ENCODE measurements at regions of chrX and their contacts with region 1.

Region 1: GRCh38 chrX:41084044-41084892 is 977 bp upstream of the USP9X start:
- DNase-seq: peak; percentile 89 to 100 (median 98)
- ATAC-seq: peak; percentile 81
- H3K4me3 ChIP-seq: peak overlapping the region; percentile 97
- H3K4me3 Mint-ChIP-seq: peak overlapping the region; percentile 86 to 98 (median 94)
- H3K27ac ChIP-seq: peak overlapping the region; percentile 99
- H3K27ac Mint-ChIP-seq: peak overlapping the region; percentile 96 to 100 (median 99)
- H3K4me1 ChIP-seq: peaks cover under 1 to 7% of the 10 kb centered on the region in 2 donors
- H3K4me1 Mint-ChIP-seq: peaks cover 7 to 40% (median 17%) of the 10 kb centered on the region in 7 donors
- H3K27me3 ChIP-seq: no peaks in the 10 kb centered on the region
- H3K27me3 Mint-ChIP-seq: no peaks in the 10 kb centered on the region

Region 2: GRCh38 chrX:40175511-40176350 is 908.5 kb before region 1 on chrX:
- CTCF ChIA-PET with region 1: no interaction called
- POLR2A ChIA-PET with region 1: no interaction called
- intact Hi-C with region 1: loop called (anchors 5 to 10 kb)
- DNase-seq: peak; percentile 60 to 91 (median 83)
- ATAC-seq: peak; percentile 58
- H3K4me3 ChIP-seq: peak overlapping the region; percentile 73
- H3K4me3 Mint-ChIP-seq: peak overlapping the region; percentile 89 to 93 (median 90)
- H3K27ac ChIP-seq: peak overlapping the region; percentile 98
- H3K27ac Mint-ChIP-seq: peak overlapping the region; percentile 96 to 100 (median 98)
- H3K4me1 ChIP-seq: peaks cover 13 to 18% of the 10 kb centered on the region in 2 donors
- H3K4me1 Mint-ChIP-seq: peaks cover 5 to 46% (median 36%) of the 10 kb centered on the region in 7 donors
- H3K27me3 ChIP-seq: no peaks in the 10 kb centered on the region
- H3K27me3 Mint-ChIP-seq: no peaks in the 10 kb centered on the region

Region 3: DNA sequence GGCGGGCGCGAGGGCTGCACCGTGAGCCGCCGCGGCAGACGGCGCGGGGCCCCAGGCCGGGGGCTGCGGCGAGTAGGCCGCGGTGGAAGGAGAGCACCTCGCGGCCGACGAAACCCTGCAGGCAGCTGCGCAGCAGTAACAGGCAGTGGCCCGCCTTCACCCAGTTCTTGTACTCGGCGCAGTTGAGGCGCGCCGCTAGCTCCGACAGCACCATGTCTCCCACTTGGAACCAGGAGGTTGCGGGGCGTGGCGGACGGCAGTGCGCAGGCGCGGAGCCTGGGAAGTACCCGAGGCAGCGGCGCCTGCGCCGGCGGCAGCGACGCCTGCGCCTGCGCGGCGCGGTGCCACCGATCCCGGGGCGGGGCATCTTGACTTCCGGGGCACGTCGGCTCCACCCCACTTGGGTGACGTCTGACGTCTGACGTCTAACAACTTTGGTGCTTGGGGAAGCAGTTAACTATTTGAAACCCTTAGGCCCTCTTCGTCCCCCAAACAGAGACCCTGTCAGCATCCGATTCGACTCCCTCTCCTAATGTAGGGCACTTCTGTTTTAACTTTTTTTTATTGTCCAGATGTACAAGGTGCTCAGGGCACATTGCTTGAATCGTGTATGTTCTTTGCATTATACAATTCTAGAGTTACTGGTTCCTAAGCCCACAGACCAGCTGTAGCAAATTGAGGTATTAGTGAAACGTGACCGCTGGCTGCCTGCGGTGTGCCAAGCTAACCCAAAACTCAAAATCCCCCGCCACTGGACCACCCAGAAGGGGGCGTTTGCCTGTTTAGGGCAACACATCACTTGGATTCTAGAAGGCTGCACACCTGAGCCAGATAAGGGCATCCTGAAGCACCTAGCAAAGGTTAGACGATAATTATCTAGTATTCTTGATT is 436.7 kb before region 1 on chrX and contains the start of gene CXorf38:
- CTCF ChIA-PET with region 1: no interaction called
- POLR2A ChIA-PET with region 1: no interaction called
- intact Hi-C with region 1: loop called in 1 of 2 experiments (anchors 1 kb)
- DNase-seq: peak; percentile 86 to 99 (median 95)
- ATAC-seq: peak; percentile 85
- H3K4me3 ChIP-seq: peak within 1 kb of the TSS; percentile 73
- H3K4me3 Mint-ChIP-seq: peak within 1 kb of the TSS; percentile 89 to 96 (median 94)
- H3K27ac ChIP-seq: peak within 1 kb of the TSS; percentile 89
- H3K27ac Mint-ChIP-seq: peak within 1 kb of the TSS; percentile 88 to 99 (median 95)
- H3K4me1 ChIP-seq: peaks cover 3 to 19% of the 10 kb centered on the region in 2 donors
- H3K4me1 Mint-ChIP-seq: peaks cover 16 to 51% (median 31%) of the 10 kb centered on the region in 7 donors
- H3K27me3 ChIP-seq: no peaks in the 10 kb centered on the region
- H3K27me3 Mint-ChIP-seq: no peaks in the 10 kb centered on the region
- total RNA-seq, gene CXorf38: 15.0 to 25.4 (median 22.2) TPM

Region 4: DNA sequence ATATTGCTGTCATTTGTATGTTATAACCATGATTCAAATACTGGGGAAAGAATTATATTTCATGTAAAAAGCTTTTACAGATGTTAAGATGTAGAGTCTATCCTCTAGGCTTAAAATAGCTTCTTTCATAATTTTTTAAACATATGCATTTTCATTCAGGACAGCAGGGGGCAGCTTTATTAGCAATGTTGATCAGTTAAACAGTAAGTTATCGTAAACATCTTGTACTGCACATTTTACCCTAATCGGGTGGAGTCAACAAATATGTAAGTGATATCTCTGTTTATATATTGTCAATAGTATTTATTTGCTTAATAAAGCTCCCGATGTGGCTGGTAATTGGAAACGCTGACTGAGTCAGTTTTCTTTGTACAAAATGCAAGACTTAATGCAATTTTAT is 206.4 kb before region 1 on chrX:
- CTCF ChIA-PET with region 1: no interaction called
- POLR2A ChIA-PET with region 1: interaction called, 6 read pairs
- intact Hi-C with region 1: loop called in 1 of 2 experiments (anchors 1 kb)
- DNase-seq: peak in 6 of 9 donors; percentile 11 to 46 (median 33)
- ATAC-seq: no peak
- H3K4me3 ChIP-seq: no peak overlapping the region
- H3K4me3 Mint-ChIP-seq: peak overlapping the region in 1 of 10 donors; percentile 9
- H3K27ac ChIP-seq: no peak overlapping the region
- H3K27ac Mint-ChIP-seq: no peak overlapping the region
- H3K4me1 ChIP-seq: no peaks in the 10 kb centered on the region
- H3K4me1 Mint-ChIP-seq: no peaks in the 10 kb centered on the region
- H3K27me3 ChIP-seq: no peaks in the 10 kb centered on the region
- H3K27me3 Mint-ChIP-seq: peaks cover 0 to 4% (median 0%) of the 10 kb centered on the region in 5 donors

Region 5: GRCh38 chrX:40952855-40953254 is 131.4 kb before region 1 on chrX:
- CTCF ChIA-PET with region 1: no interaction called
- POLR2A ChIA-PET with region 1: no interaction called
- intact Hi-C with region 1: loop called in 1 of 2 experiments (anchors 10 kb)
- DNase-seq: peak in 6 of 9 donors; percentile 1 to 30 (median 24)
- ATAC-seq: peak; percentile 55
- H3K4me3 ChIP-seq: no peak overlapping the region
- H3K4me3 Mint-ChIP-seq: peak overlapping the region; percentile 45 to 77 (median 66)
- H3K27ac ChIP-seq: no peak overlapping the region
- H3K27ac Mint-ChIP-seq: peak overlapping the region in 8 of 9 donors; percentile 34 to 59 (median 52)
- H3K4me1 ChIP-seq: peaks cover 0 to 7% of the 10 kb centered on the region in 2 donors
- H3K4me1 Mint-ChIP-seq: peaks cover 2 to 19% (median 12%) of the 10 kb centered on the region in 7 donors
- H3K27me3 ChIP-seq: no peaks in the 10 kb centered on the region
- H3K27me3 Mint-ChIP-seq: no peaks in the 10 kb centered on the region

Region 6: GRCh38 chrX:41010188-41010846 is 74.0 kb before region 1 on chrX:
- CTCF ChIA-PET with region 1: no interaction called
- POLR2A ChIA-PET with region 1: interaction called, 12 read pairs
- intact Hi-C with region 1: loop called (anchors 1 to 2 kb)
- DNase-seq: peak; percentile 8 to 71 (median 59)
- ATAC-seq: peak; percentile 93
- H3K4me3 ChIP-seq: peak overlapping the region; percentile 32
- H3K4me3 Mint-ChIP-seq: peak overlapping the region; percentile 67 to 81 (median 76)
- H3K27ac ChIP-seq: peak overlapping the region; percentile 68
- H3K27ac Mint-ChIP-seq: peak overlapping the region; percentile 88 to 94 (median 91)
- H3K4me1 ChIP-seq: peaks cover 7% of the 10 kb centered on the region in 2 donors
- H3K4me1 Mint-ChIP-seq: peaks cover 13 to 30% (median 21%) of the 10 kb centered on the region in 7 donors
- H3K27me3 ChIP-seq: no peaks in the 10 kb centered on the region
- H3K27me3 Mint-ChIP-seq: peaks cover 0 to 3% (median 0%) of the 10 kb centered on the region in 5 donors

Region 7: DNA sequence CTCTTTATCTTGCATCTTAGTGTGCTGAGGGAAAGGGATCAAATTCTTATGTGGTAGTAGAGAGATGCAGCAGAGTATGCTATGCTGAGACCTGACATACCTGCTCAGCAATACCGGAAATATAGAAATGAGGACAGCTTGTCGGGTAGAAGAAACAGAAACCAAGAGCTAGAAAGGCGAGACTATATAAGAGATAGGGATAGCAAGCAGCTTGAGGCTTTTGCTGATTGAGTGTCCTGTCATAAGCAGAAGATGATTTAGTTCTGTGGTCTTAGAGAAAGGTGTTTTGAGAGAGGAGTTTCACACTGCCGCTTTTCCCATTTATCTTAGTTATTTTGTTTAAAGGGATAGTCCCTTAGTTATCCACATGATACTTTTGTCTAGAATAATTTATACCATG is 32.7 kb after region 1 on chrX:
- CTCF ChIA-PET with region 1: interaction called, 3 read pairs
- POLR2A ChIA-PET with region 1: interaction called, 42 read pairs
- intact Hi-C with region 1: loop called (anchors 1 to 2 kb)
- DNase-seq: peak in 6 of 9 donors; percentile 17 to 38 (median 33)
- ATAC-seq: peak; percentile 66
- H3K4me3 ChIP-seq: no peak overlapping the region
- H3K4me3 Mint-ChIP-seq: peak overlapping the region; percentile 18 to 71 (median 66)
- H3K27ac ChIP-seq: peak overlapping the region; percentile 55
- H3K27ac Mint-ChIP-seq: peak overlapping the region; percentile 23 to 82 (median 75)
- H3K4me1 ChIP-seq: peaks cover 29 to 32% of the 10 kb centered on the region in 2 donors
- H3K4me1 Mint-ChIP-seq: peaks cover 24 to 90% (median 67%) of the 10 kb centered on the region in 7 donors
- H3K27me3 ChIP-seq: no peaks in the 10 kb centered on the region
- H3K27me3 Mint-ChIP-seq: no peaks in the 10 kb centered on the region

Measured in naive thymus-derived CD4-positive, alpha-beta T cell (primary cell).